ENCODE measurements at regions of chr12 and their contacts with region 1.

Region 1: DNA sequence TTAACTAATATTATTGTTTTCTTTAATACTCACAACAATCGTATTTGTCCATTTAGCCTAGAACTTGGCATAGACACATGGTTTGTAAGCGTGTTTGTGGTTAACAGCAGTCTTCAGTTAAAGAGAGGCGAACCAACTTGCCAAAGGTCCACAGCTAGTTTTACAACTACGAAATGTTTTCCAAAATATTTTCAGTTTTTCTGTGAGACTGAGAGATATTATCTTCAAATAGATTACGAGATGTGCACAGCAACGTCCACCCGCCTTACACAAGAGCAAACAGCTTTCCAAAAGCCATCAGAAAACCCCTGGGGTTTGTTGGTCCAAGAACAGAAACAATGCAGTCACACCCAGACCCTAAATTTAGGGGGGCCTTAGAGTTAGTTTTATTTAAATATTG is 58.6 kb upstream of the RASSF3 start:
- DNase-seq: no peak
- H3K4me3 Mint-ChIP-seq: no peak overlapping the region
- H3K27ac Mint-ChIP-seq: no peak overlapping the region
- H3K4me1 Mint-ChIP-seq: no peaks in the 10 kb centered on the region
- H3K27me3 Mint-ChIP-seq: no peaks in the 10 kb centered on the region
- CTCF ChIP-seq: no peak

Region 2: GRCh38 chr12:64500394-64500793 is 51.3 kb before region 1 on chr12:
- CTCF ChIA-PET with region 1: no interaction called
- POLR2A ChIA-PET with region 1: no interaction called
- intact Hi-C with region 1: no loop called
- DNase-seq: no peak
- H3K4me3 Mint-ChIP-seq: no peak overlapping the region
- H3K27ac Mint-ChIP-seq: no peak overlapping the region
- H3K4me1 Mint-ChIP-seq: no peaks in the 10 kb centered on the region
- H3K27me3 Mint-ChIP-seq: no peaks in the 10 kb centered on the region
- CTCF ChIP-seq: no peak

Region 3: GRCh38 chr12:64522316-64522715 is 29.4 kb before region 1 on chr12:
- CTCF ChIA-PET with region 1: interaction called, 26 read pairs
- POLR2A ChIA-PET with region 1: no interaction called
- intact Hi-C with region 1: no loop called
- DNase-seq: peak; percentile 16
- H3K4me3 Mint-ChIP-seq: no peak overlapping the region
- H3K27ac Mint-ChIP-seq: peak overlapping the region; percentile 59
- H3K4me1 Mint-ChIP-seq: peaks cover 6% of the 10 kb centered on the region
- H3K27me3 Mint-ChIP-seq: no peaks in the 10 kb centered on the region
- CTCF ChIP-seq: no peak

Region 4: GRCh38 chr12:64538121-64538520 is 13.6 kb before region 1 on chr12:
- CTCF ChIA-PET with region 1: interaction called, 38 read pairs
- POLR2A ChIA-PET with region 1: interaction called, 5 read pairs
- intact Hi-C with region 1: no loop called
- DNase-seq: no peak
- H3K4me3 Mint-ChIP-seq: no peak overlapping the region
- H3K27ac Mint-ChIP-seq: no peak overlapping the region
- H3K4me1 Mint-ChIP-seq: no peaks in the 10 kb centered on the region
- H3K27me3 Mint-ChIP-seq: no peaks in the 10 kb centered on the region
- CTCF ChIP-seq: no peak

Region 5: DNA sequence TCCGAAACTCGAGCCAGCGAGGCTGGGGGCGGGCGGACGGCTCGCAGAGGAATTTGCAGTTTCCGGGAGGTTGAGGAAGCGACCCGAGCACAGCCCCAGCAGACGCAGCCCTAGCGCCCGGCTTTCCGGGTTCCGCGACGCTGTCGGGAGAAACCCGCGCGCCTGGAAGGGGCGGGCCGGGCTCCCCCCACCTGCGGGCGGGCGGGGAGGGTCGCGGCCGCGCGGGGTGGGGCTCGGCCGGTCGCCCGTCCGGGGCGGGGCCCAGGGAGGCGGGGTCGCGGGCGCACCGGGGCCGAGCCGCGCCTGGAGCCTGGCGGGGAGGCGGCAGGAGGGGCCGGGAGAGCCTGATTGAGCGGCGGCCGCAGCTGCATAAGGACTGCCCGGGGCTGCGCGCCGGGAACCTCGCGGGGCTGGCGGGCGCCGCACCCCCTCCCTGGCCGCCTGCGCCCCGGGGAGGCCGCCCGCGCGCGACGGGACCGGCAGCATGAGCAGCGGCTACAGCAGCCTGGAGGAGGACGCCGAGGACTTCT is 58.5 kb after region 1 on chr12 and contains the start of gene RASSF3:
- CTCF ChIA-PET with region 1: interaction called, 36 read pairs
- POLR2A ChIA-PET with region 1: interaction called, 17 read pairs
- intact Hi-C with region 1: loop called (anchors 1 kb)
- DNase-seq: peak; percentile 71
- H3K4me3 Mint-ChIP-seq: peak within 1 kb of the TSS; percentile 80
- H3K27ac Mint-ChIP-seq: peak within 1 kb of the TSS; percentile 90
- H3K4me1 Mint-ChIP-seq: peaks cover 14% of the 10 kb centered on the region
- H3K27me3 Mint-ChIP-seq: no peaks in the 10 kb centered on the region
- CTCF ChIP-seq: no peak
- total RNA-seq, gene RASSF3: 30.5 and 30.6 TPM in 2 replicates

Region 6: GRCh38 chr12:64696080-64696741 is 144.5 kb after region 1 on chr12:
- CTCF ChIA-PET with region 1: interaction called, 250 read pairs
- POLR2A ChIA-PET with region 1: interaction called, 16 read pairs
- intact Hi-C with region 1: loop called (anchors 1 kb)
- DNase-seq: peak; percentile 39
- H3K4me3 Mint-ChIP-seq: no peak overlapping the region
- H3K27ac Mint-ChIP-seq: no peak overlapping the region
- H3K4me1 Mint-ChIP-seq: no peaks in the 10 kb centered on the region
- H3K27me3 Mint-ChIP-seq: no peaks in the 10 kb centered on the region
- CTCF ChIP-seq: peak; percentile 55

Region 7: DNA sequence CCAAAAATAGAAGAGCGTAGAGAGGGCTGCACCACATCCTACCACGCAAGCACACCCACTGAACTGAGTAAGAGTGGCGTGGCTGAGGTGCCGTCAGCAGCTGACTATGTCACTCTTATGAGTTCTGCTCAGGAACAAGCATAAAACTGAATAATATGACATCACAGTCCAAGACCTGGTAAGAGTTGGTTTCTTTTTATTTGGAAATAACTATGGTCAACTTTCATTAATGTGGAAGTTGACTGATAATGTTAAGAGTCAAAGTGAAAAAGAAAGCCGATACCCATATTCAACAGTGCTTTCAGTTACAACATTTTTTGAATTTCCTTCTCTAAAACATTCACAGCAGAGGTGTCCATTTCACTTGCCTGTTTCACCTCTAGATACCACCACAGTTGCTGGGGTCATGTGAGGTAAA is 162.9 kb after region 1 on chr12:
- CTCF ChIA-PET with region 1: interaction called, 10 read pairs
- POLR2A ChIA-PET with region 1: no interaction called
- intact Hi-C with region 1: no loop called
- DNase-seq: no peak
- H3K4me3 Mint-ChIP-seq: no peak overlapping the region
- H3K27ac Mint-ChIP-seq: no peak overlapping the region
- H3K4me1 Mint-ChIP-seq: no peaks in the 10 kb centered on the region
- H3K27me3 Mint-ChIP-seq: no peaks in the 10 kb centered on the region
- CTCF ChIP-seq: no peak